ENCODE measurements at regions of chr12 and their contacts with region 1.

Region 1: DNA sequence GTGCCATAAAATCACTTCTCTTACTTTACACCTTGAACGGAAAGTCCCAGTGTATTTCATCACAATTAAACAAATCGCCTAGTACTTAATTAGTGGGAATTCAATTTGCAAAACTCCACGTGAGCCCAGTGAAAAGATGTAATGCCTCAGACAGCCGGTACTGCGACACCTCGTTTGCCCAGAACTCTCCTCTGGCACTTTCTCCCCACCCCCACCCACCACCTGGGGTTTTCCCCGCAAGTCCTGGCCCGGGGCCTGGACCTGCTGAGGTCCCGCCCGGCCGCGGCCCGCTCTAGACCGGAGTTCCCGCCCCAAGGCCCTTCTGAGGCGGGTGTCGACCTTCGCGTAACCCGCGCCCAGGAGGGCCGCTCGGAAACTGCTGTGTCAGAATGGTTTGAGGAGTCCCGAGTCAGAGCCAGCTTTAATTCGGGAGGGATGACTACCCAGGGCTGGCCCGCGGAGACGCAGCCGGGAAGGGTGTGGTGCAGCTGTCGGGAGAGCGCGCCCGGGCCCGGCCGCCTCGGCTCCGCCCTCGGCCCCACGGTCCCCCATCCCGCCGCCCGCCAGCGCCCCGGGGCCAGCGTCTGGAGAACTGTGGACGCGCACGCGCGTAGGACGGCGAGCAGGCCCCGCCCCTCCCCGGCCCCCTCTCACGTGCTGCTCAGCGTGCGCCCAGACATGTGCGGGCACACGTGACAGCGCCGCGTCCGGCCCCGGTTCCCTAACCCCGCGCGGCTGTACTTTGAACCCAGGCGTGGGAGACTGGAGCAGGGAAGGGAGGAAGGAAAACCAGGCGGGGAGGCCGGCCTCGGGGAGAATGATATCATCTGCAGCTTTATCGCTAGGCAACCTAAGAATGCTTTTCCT is 10.8 kb downstream of the BHLHE41 start:
- DNase-seq: peak; percentile 97 to 98 (median 98)
- H3K4me3 ChIP-seq: peak overlapping the region; percentile 52
- H3K27ac ChIP-seq: peak overlapping the region; percentile 89 to 96
- H3K4me1 ChIP-seq: no peaks in the 10 kb centered on the region
- H3K27me3 ChIP-seq: no peaks in the 10 kb centered on the region
- CTCF ChIP-seq: peak in 1 of 3 donors; percentile 69
- EP300 ChIP-seq: peak; percentile 85
- POLR2A ChIP-seq: peak; percentile 89

Region 2: DNA sequence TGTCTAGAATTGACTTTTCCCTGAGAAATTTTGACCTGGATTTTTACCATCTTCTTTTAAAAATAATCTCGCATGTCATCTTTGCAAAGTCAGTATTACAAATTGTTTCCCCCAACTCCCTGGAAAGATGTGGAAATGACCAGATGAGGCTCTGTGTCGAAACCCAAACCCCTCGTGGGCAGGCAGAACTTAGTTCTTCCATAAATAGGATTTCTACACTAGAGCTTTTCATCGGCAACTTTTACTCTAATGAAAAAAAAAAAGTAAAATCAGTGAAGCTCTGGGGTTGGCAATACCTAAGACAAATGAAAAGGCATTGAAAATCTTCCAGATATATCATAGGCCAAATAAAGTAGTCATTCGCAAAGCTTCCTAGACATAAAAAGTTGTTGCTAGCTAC is 98.3 kb after region 1 on chr12:
- intact Hi-C with region 1: no loop called
- DNase-seq: peak in 1 of 5 donors; percentile 27
- H3K4me3 ChIP-seq: no peak overlapping the region
- H3K27ac ChIP-seq: peak overlapping the region in 1 of 2 donors; percentile 34
- H3K4me1 ChIP-seq: no peaks in the 10 kb centered on the region
- H3K27me3 ChIP-seq: no peaks in the 10 kb centered on the region
- CTCF ChIP-seq: no peak
- EP300 ChIP-seq: no peak
- POLR2A ChIP-seq: no peak

Region 3: DNA sequence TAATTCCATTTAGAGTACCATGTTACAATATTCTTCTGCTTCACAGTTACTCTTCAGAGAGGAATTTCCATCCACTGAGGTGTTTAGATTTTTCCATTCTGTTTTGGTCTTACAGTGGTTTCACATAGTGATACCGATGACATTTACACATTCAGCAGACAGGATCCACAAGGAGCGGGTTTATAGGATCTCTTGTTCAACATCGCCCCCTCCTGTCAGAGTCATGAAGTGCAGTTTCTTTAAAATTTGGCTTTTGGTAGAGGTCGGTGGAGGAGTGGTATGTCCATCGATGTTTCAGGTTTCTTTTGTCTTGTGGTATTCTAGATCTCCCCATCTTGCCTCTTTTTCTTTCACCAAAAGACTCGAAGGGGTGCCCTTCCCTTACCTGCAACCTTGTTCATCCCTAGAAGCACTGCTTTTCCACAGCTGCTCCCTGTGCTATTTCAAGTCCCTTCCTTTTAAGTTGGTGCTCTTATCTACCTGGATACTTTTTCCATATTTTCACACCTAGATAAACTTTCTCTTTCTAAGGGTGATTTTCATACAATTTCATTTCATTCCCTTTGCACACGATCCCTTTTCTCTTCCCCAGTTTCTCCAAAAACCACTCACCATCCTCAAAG is 537.6 kb after region 1 on chr12:
- intact Hi-C with region 1: loop called in 1 of 4 experiments (anchors 10 kb)
- DNase-seq: peak in 4 of 5 donors; percentile 18 to 63 (median 38)
- H3K4me3 ChIP-seq: no peak overlapping the region
- H3K27ac ChIP-seq: no peak overlapping the region
- H3K4me1 ChIP-seq: peaks cover 2% of the 10 kb centered on the region
- H3K27me3 ChIP-seq: no peaks in the 10 kb centered on the region
- CTCF ChIP-seq: peak; percentile 17 to 73 (median 71)
- EP300 ChIP-seq: no peak
- POLR2A ChIP-seq: no peak

Measured in ovary (tissue), 10 donors.